ENCODE measurements at regions of chr22 and their contacts with region 1.

Region 1: GRCh38 chr22:27461470-27461869 is 340.1 kb downstream of the MN1 start:
- DNase-seq: no peak
- ATAC-seq: no peak
- H3K4me3 ChIP-seq: no peak overlapping the region
- H3K27ac ChIP-seq: no peak overlapping the region
- H3K4me1 ChIP-seq: no peaks in the 10 kb centered on the region
- H3K27me3 ChIP-seq: peaks cover 0 to 6% (median 2%) of the 10 kb centered on the region in 3 donors
- CTCF ChIP-seq: no peak
- POLR2A ChIP-seq: no peak

Region 2: DNA sequence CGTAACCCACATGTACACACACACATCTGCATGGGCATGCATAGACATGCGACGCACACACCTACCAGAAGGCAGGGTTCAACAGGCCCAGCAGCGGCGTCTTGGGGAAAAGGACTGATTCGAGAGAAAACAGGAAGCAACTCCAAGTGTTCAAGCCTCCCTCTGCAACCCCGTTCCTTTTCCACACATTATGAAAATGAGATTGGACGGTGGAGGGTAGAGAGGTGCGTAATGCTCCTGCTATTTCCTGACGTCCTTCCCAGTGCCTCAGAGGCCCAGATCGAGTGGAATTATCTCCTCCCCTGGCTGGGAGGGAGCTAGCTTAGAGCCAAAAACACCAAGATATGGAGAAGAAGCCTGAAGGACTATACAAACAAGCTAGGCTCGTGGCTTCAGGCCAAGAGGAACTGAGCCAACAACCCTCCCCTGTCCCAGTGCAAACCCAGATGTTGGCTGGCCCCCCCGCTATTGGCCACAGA is 50.9 kb after region 1 on chr22:
- in situ Hi-C with region 1: no loop called
- intact Hi-C with region 1: no loop called
- DNase-seq: peak; percentile 6 to 42
- ATAC-seq: peak in 1 of 2 donors; percentile 30
- H3K4me3 ChIP-seq: no peak overlapping the region
- H3K27ac ChIP-seq: peak overlapping the region in 2 of 4 donors; percentile 45 to 83
- H3K4me1 ChIP-seq: peaks cover 35 to 40% of the 10 kb centered on the region in 2 donors
- H3K27me3 ChIP-seq: no peaks in the 10 kb centered on the region
- CTCF ChIP-seq: no peak
- POLR2A ChIP-seq: no peak

Region 3: DNA sequence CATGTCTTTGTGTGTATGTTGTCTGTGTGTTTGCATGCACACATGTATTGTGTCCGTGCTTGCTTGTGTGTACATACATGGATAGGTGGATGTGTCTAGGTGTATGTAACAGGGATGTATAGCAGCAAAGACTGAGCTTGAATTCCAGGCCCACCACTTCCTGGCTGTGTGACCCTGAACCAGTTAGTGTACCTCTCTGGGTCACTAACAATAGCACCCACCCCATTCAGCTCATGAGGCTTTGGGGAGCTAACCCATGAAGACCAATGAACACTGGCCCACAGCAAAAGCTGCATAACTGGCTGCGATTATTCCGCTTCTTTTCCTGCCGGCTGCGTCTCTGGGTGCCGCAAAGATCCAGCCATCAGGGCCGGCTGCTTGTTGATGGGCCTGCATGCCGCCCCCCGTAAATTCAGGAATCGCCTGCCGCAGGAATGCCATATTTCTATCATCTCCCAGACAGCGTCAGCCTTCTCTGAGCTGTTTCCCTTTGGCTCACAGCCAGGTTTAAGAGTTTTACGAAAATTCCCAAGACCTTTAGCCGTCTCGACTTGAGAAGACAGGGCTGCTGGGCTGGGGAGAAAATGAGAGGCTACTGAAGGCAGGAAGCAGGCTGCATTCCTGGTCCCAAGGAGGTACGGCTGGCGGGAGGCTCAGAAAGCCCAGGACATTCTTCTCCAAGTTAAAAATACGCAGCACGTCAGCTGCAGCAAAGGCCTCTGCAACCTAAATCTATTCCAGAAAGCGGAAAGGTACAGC is 115.5 kb after region 1 on chr22:
- in situ Hi-C with region 1: no loop called
- intact Hi-C with region 1: loop called (anchors 10 kb)
- DNase-seq: no peak
- ATAC-seq: no peak
- H3K4me3 ChIP-seq: no peak overlapping the region
- H3K27ac ChIP-seq: no peak overlapping the region
- H3K4me1 ChIP-seq: peaks cover 0 to 2% of the 10 kb centered on the region in 2 donors
- H3K27me3 ChIP-seq: peaks cover 0 to 10% (median 2%) of the 10 kb centered on the region in 3 donors
- CTCF ChIP-seq: no peak
- POLR2A ChIP-seq: no peak

Region 4: GRCh38 chr22:27588268-27588667 is 126.8 kb after region 1 on chr22:
- in situ Hi-C with region 1: no loop called
- intact Hi-C with region 1: no loop called
- DNase-seq: no peak
- ATAC-seq: no peak
- H3K4me3 ChIP-seq: no peak overlapping the region
- H3K27ac ChIP-seq: no peak overlapping the region
- H3K4me1 ChIP-seq: no peaks in the 10 kb centered on the region
- H3K27me3 ChIP-seq: no peaks in the 10 kb centered on the region
- CTCF ChIP-seq: no peak
- POLR2A ChIP-seq: no peak

Measured in gastrocnemius medialis (tissue), 4 donors.